MCF 10A (cell line): ENCODE measurements at regions of chr19 and their contacts with region 1.

Region 1: GRCh38 chr19:17255150-17255621 is 9.4 kb downstream of the USHBP1 start:
- DNase-seq: peak; percentile 75
- H3K4me3 Mint-ChIP-seq: no peak overlapping the region
- H3K27ac Mint-ChIP-seq: no peak overlapping the region
- H3K4me1 Mint-ChIP-seq: peaks cover 10% of the 10 kb centered on the region
- H3K27me3 Mint-ChIP-seq: no peaks in the 10 kb centered on the region
- CTCF ChIP-seq: no peak

Region 2: GRCh38 chr19:17266975-17267788 is 12.0 kb after region 1 on chr19 and contains the start of gene BABAM1:
- CTCF ChIA-PET with region 1: interaction called, 5 read pairs
- POLR2A ChIA-PET with region 1: interaction called, 21 read pairs
- intact Hi-C with region 1: no loop called
- DNase-seq: peak; percentile 99
- H3K4me3 Mint-ChIP-seq: peak within 1 kb of the TSS; percentile 84
- H3K27ac Mint-ChIP-seq: peak within 1 kb of the TSS; percentile 93
- H3K4me1 Mint-ChIP-seq: peaks cover 6% of the 10 kb centered on the region
- H3K27me3 Mint-ChIP-seq: no peaks in the 10 kb centered on the region
- CTCF ChIP-seq: no peak
- total RNA-seq, gene BABAM1: 96.1 and 104 TPM in 2 replicates